ENCODE measurements at regions of chr20 and their contacts with region 1.

Region 1: DNA sequence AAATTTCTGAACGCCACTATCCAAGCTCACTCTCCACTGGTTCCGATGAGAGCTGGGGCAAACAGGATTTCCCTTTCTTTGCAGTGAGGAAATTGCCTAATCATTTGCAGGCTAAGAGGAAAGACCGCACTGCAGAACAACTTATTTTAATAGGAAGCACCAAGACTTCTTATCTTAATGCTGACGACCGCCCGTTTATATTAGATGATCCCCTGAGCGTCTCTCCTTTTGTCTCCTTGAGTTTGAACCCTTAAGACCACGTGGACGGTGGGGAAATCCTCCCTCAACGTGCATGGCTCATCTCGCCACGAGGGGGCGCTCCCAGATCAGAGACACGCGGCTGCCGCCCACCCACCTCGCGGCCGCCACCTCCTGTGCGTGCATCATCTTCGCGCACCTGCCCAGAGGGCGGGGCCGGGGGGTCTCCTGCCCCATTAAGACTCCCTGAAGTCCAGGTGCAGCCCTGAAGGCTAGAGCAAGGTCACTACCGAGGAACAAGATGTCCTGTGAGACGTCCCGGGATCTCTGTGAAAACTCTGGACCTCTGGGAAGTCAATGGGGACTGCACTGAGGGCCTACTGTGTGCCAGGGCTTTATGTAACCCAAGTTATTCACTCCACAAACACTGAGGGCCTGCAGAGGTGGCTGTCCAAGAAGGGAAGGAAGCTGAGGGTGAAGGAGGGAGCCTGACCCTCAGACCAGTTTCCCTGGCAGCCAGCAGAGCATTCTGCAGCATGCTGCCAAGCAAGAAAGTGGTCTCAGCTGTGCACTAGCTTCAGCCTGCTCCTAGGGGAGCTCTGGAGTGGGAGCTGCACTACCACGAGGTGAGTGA is 28.1 kb downstream of the PDYN start:
- DNase-seq: peak; percentile 46 to 84 (median 75)
- ATAC-seq: peak; percentile 57
- H3K4me3 ChIP-seq: no peak overlapping the region
- H3K4me3 Mint-ChIP-seq: peak overlapping the region; percentile 56
- H3K27ac ChIP-seq: no peak overlapping the region
- H3K27ac Mint-ChIP-seq: no peak overlapping the region
- H3K4me1 ChIP-seq: peaks cover 9% of the 10 kb centered on the region
- H3K4me1 Mint-ChIP-seq: peaks cover 12% of the 10 kb centered on the region
- H3K27me3 ChIP-seq: peaks cover 0 to 3% of the 10 kb centered on the region in 2 experiments
- H3K27me3 Mint-ChIP-seq: peaks cover 26% of the 10 kb centered on the region
- CTCF ChIP-seq: peak; percentile 92

Region 2: DNA sequence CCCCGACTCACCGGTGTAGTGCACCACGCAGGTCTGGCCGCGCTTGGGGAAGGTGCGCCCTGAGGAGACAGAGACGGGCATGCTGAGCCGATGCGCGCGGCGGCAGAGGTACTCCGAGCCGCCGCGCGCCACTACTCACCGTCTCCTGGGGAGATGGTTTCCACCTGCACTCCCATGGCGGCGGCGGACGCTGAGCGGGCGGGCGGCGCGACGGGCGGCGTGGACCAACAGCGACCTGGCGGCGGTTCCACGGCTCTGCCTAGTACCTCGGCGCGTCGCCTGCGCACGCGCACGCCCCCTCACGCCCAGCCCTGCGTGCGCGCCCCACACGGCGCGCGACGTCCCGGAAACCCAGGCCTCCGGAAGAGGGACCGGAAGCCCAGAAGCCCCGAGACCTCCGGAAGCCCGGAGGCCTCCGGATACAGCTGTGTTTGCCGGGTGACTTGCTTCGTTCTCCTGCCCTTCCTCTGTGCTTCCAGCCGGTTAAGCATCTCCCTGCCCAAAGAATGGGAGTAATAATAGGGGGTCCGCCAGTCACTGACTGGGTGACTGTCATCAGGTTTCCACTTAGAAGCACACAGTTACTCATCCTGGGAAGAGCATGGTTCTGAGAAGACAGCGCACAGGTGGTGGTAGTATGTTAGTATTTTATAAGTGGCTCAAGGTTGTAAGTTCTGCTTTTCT is 572.8 kb before region 1 on chr20 and contains the start of gene FKBP1A:
- CTCF ChIA-PET with region 1: no interaction called
- POLR2A ChIA-PET with region 1: no interaction called
- intact Hi-C with region 1: no loop called
- DNase-seq: peak; percentile 85 to 97 (median 92)
- ATAC-seq: peak; percentile 84
- H3K4me3 ChIP-seq: peak within 1 kb of the TSS; percentile 62 to 73
- H3K4me3 Mint-ChIP-seq: peak within 1 kb of the TSS; percentile 94
- H3K27ac ChIP-seq: peak within 1 kb of the TSS; percentile 58 to 68
- H3K27ac Mint-ChIP-seq: peak within 1 kb of the TSS; percentile 96
- H3K4me1 ChIP-seq: peaks cover 47% of the 10 kb centered on the region
- H3K4me1 Mint-ChIP-seq: peaks cover 53% of the 10 kb centered on the region
- H3K27me3 ChIP-seq: no peaks in the 10 kb centered on the region
- H3K27me3 Mint-ChIP-seq: no peaks in the 10 kb centered on the region
- CTCF ChIP-seq: no peak
- total RNA-seq, gene FKBP1A: 34.0 to 36.8 TPM

Region 3: DNA sequence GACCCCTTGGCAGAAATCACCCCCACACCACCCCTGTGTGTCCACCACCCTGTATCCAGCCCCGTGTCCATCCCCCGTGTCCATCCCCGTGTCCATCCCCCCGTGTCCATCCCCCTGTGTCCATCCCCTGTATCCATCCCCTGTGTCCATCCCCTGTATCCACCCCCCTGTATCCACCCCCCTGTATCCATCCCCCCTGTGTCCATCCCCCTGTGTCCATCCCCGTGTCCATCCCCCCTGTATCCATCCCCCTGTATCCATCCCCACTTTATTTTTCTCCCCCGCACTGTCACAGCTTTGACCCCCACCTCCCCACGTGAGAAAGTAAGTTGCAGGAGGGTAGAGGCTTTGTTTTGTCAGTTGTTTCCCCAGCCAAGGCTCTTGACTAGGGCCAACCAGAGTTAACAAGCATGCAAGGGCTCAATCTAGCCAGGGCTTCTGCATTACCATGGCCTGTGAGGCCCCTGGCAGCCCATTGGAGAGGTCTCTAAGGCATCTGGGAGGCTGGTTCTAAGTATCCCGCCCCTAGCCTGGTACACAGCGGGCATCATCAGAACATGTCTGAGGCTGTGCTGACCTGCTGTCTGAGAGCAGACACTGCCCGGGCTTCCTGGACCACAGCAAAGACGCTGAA is 88.6 kb before region 1 on chr20:
- CTCF ChIA-PET with region 1: no interaction called
- POLR2A ChIA-PET with region 1: no interaction called
- intact Hi-C with region 1: no loop called
- DNase-seq: peak in 2 of 9 experiments; percentile 44 to 46
- ATAC-seq: peak; percentile 17
- H3K4me3 ChIP-seq: no peak overlapping the region
- H3K4me3 Mint-ChIP-seq: no peak overlapping the region
- H3K27ac ChIP-seq: no peak overlapping the region
- H3K27ac Mint-ChIP-seq: no peak overlapping the region
- H3K4me1 ChIP-seq: no peaks in the 10 kb centered on the region
- H3K4me1 Mint-ChIP-seq: no peaks in the 10 kb centered on the region
- H3K27me3 ChIP-seq: no peaks in the 10 kb centered on the region
- H3K27me3 Mint-ChIP-seq: peaks cover 4% of the 10 kb centered on the region
- CTCF ChIP-seq: no peak

Region 4: GRCh38 chr20:2093159-2093781 is 127.5 kb after region 1 on chr20:
- CTCF ChIA-PET with region 1: interaction called, 4 read pairs
- POLR2A ChIA-PET with region 1: no interaction called
- intact Hi-C with region 1: loop called in 1 of 2 experiments (anchors 2 kb)
- DNase-seq: peak in 5 of 9 experiments; percentile 12 to 48 (median 43)
- ATAC-seq: no peak
- H3K4me3 ChIP-seq: no peak overlapping the region
- H3K4me3 Mint-ChIP-seq: no peak overlapping the region
- H3K27ac ChIP-seq: no peak overlapping the region
- H3K27ac Mint-ChIP-seq: no peak overlapping the region
- H3K4me1 ChIP-seq: no peaks in the 10 kb centered on the region
- H3K4me1 Mint-ChIP-seq: no peaks in the 10 kb centered on the region
- H3K27me3 ChIP-seq: peaks cover 6 to 18% of the 10 kb centered on the region in 2 experiments
- H3K27me3 Mint-ChIP-seq: peaks cover 51% of the 10 kb centered on the region
- CTCF ChIP-seq: peak; percentile 21

Region 5: GRCh38 chr20:2178318-2179232 is 212.8 kb after region 1 on chr20:
- CTCF ChIA-PET with region 1: interaction called, 100 read pairs
- POLR2A ChIA-PET with region 1: no interaction called
- intact Hi-C with region 1: no loop called
- DNase-seq: no peak
- ATAC-seq: no peak
- H3K4me3 ChIP-seq: no peak overlapping the region
- H3K4me3 Mint-ChIP-seq: no peak overlapping the region
- H3K27ac ChIP-seq: no peak overlapping the region
- H3K27ac Mint-ChIP-seq: no peak overlapping the region
- H3K4me1 ChIP-seq: no peaks in the 10 kb centered on the region
- H3K4me1 Mint-ChIP-seq: no peaks in the 10 kb centered on the region
- H3K27me3 ChIP-seq: no peaks in the 10 kb centered on the region
- H3K27me3 Mint-ChIP-seq: peaks cover 13% of the 10 kb centered on the region
- CTCF ChIP-seq: no peak

Region 6: DNA sequence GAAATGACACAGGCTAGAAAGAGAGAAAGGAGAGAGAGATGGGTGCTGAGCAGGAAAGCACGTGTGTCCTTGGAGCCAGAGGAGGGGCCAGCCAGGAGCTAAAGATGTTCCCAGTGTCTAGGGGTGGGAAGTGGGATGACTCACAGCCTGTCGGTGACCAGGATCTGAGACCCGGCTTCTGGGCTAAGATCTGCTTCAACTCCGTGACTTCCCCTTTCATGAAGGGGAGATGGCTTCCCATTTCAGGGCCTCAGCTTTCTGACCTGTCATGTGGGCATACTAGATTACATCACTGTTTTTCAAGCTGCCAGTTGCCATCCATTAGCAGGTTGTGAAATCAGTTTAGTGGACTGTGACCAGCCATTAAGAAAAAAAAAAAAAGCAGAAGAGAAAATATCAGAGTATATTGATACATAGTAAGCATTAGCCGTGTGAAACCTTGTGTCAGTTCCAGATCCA is 335.5 kb after region 1 on chr20:
- CTCF ChIA-PET with region 1: no interaction called
- POLR2A ChIA-PET with region 1: no interaction called
- intact Hi-C with region 1: no loop called
- DNase-seq: peak in 2 of 9 experiments; percentile 8 to 46
- ATAC-seq: no peak
- H3K4me3 ChIP-seq: no peak overlapping the region
- H3K4me3 Mint-ChIP-seq: no peak overlapping the region
- H3K27ac ChIP-seq: no peak overlapping the region
- H3K27ac Mint-ChIP-seq: no peak overlapping the region
- H3K4me1 ChIP-seq: no peaks in the 10 kb centered on the region
- H3K4me1 Mint-ChIP-seq: no peaks in the 10 kb centered on the region
- H3K27me3 ChIP-seq: no peaks in the 10 kb centered on the region
- H3K27me3 Mint-ChIP-seq: peaks cover 13% of the 10 kb centered on the region
- CTCF ChIP-seq: no peak

Region 7: GRCh38 chr20:2451939-2452732 is 486.4 kb after region 1 on chr20:
- CTCF ChIA-PET with region 1: no interaction called
- POLR2A ChIA-PET with region 1: no interaction called
- intact Hi-C with region 1: loop called (anchors 2 kb)
- DNase-seq: peak; percentile 17 to 70 (median 65)
- ATAC-seq: peak; percentile 69
- H3K4me3 ChIP-seq: no peak overlapping the region
- H3K4me3 Mint-ChIP-seq: no peak overlapping the region
- H3K27ac ChIP-seq: no peak overlapping the region
- H3K27ac Mint-ChIP-seq: no peak overlapping the region
- H3K4me1 ChIP-seq: no peaks in the 10 kb centered on the region
- H3K4me1 Mint-ChIP-seq: peaks cover 7% of the 10 kb centered on the region
- H3K27me3 ChIP-seq: no peaks in the 10 kb centered on the region
- H3K27me3 Mint-ChIP-seq: no peaks in the 10 kb centered on the region
- CTCF ChIP-seq: peak; percentile 62